Dorsolateral prefrontal cortex (tissue), 120 donors: ENCODE measurements at regions of chr19 and their contacts with region 1.

Region 1: DNA sequence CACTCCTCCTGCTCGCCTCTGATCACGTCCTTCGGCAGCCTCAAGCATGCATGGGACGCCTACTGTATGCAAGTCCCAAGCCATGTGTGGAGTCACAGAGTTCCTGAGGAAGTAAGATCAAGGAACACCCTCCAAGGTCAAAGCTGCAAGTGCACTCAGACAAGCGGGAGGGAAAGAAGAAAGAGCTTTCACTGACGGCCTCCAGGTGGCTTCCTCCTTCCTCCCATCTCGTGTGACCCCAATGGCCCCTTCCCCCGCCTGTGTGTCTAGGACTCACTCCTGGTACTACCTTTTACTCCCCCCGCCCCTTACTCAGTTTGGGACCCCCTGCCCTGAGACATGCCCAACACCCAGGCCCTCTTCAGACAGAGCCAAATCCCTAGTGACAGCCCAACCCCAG is 6.0 kb downstream of the HAUS8 start:
- DNase-seq: no peak
- H3K4me3 ChIP-seq: no peak overlapping the region
- H3K27ac ChIP-seq: no peak overlapping the region
- H3K27me3 ChIP-seq: no peaks in the 10 kb centered on the region
- CTCF ChIP-seq: no peak

Region 2: DNA sequence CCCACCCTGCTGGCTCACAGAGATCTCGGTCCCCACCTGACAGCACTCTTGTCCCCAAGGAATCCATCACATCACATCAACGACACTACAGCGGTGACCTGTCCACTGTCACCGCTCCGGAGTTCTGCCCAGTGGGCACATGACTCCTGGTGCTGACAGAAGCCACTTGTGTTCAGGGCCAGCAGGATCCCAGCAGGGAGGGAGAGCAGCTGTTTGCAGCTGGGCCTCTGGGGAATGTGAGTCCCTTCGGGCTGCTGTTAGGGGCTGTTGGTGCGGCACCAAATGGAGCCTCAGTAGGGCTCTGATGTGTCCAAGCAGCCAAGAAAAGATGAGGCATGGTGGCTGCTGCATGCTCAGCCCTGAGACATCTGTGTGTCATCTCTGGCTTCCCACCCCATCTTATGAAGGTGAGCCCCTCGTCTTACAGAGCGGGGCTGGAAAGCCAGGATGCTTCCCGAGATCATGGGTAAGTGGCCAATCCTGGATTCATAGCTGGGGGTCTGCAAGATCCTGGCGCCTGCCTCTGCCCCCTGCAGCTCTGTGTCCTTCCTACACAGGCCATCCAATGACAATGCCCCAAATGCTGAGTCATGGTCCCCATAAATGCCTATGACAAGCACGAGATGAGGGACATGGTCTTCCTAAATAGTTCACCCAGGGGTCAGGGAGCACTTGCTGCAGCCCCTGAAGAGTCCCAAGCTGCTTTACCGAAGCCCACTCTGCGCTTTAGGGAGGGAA is 124.4 kb before region 1 on chr19:
- intact Hi-C with region 1: no loop called
- DNase-seq: peak in 6 of 10 donors; percentile 39 to 58 (median 44)
- H3K4me3 ChIP-seq: no peak overlapping the region
- H3K27ac ChIP-seq: peak overlapping the region in 16 of 59 donors; percentile 14 to 61 (median 32)
- H3K27me3 ChIP-seq: no peaks in the 10 kb centered on the region
- CTCF ChIP-seq: no peak

Region 3: GRCh38 chr19:17107525-17108452 is 38.6 kb after region 1 on chr19:
- intact Hi-C with region 1: no loop called
- DNase-seq: peak in 9 of 10 donors; percentile 32 to 92 (median 72)
- H3K4me3 ChIP-seq: peak overlapping the region in 20 of 59 donors; percentile 0 to 39 (median 12)
- H3K27ac ChIP-seq: peak overlapping the region in 58 of 59 donors; percentile 26 to 92 (median 78)
- H3K27me3 ChIP-seq: no peaks in the 10 kb centered on the region
- CTCF ChIP-seq: no peak

Region 4: DNA sequence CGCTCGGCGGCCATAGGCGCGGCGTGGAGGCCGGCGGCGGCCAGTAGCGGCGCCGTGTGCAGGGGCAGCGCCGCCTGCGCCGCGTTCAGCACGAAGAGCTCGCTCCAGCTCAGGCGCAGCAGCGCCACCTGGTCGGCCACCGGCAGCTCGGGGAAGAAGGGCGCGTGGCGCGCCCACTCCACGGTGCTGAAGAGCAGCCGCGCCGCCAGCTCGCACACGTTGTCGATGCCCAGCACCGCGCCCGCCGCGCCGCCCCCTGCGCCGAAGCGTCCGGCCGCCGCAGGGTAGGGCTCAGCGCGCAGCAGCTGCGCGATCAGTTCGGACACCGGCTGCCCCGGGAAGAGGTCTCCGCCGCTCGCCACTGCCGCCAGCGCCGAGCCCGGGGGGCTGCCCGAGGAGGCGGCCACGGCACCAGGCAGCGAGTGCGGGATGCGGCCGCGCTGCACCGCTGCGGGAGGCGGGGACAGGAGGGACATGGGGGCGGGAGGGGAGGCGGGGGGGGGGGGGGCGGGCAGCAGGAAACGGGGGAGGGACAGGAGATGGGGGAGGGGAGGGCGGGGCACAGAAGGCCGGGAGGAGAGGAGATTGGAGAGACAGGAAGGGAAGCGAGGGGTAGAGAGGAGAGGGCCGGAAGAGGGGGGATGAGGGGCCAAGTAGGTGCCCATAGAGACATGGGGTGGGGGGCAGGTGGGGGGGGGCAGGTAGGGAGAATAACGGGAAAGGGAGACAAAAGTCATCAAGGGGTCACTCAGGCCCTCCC is 166.6 kb after region 1 on chr19:
- intact Hi-C with region 1: loop called in 1 of 2 experiments (anchors 5 kb)
- DNase-seq: peak; percentile 52 to 89 (median 76)
- H3K4me3 ChIP-seq: peak overlapping the region; percentile 40 to 75 (median 63)
- H3K27ac ChIP-seq: peak overlapping the region in 55 of 59 donors; percentile 12 to 96 (median 80)
- H3K27me3 ChIP-seq: no peaks in the 10 kb centered on the region
- CTCF ChIP-seq: peak in 55 of 56 donors; percentile 23 to 85 (median 67)

Region 5: GRCh38 chr19:17282488-17283255 is 213.5 kb after region 1 on chr19:
- intact Hi-C with region 1: loop called in 1 of 2 experiments (anchors 1 kb)
- DNase-seq: peak; percentile 68 to 87 (median 77)
- H3K4me3 ChIP-seq: peak overlapping the region; percentile 16 to 64 (median 48)
- H3K27ac ChIP-seq: no peak overlapping the region
- H3K27me3 ChIP-seq: peaks cover 0 to 12% (median 0%) of the 10 kb centered on the region in 45 donors
- CTCF ChIP-seq: peak; percentile 64 to 97 (median 92)

Region 6: DNA sequence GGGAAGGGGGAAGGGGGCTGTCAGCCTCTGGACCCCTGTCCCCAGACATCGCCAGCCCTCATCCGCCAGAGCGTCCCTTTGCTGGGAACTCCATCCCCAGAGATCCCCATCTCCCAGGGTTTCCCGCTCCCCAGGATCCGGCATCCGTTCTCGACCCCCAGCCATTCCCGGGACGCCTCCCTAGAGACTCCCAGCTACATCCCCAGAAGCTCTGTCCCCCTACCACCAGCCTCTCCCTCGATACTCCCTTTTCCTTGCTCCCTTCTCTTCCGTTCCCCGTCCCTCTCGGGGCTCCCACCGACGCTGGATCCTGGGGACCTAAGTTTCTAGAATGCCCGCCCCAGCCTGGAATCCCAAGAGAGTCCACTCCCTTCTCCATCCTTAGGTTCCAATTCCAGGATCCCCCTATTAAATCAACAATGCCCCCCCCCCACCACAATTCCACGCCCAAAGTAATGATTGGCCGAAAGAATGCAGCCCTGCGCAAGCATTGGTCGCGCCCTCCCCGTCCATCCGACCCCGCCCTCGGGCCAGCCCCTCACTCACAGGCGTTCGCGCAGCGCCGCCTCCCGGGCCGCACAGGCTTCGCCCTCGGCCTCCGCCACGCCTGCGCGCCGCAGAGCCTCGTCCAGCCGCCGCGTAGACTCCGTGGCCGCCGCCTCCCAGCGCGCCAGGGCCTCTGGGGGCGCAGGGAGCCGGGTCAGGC is 321.6 kb after region 1 on chr19:
- intact Hi-C with region 1: loop called in 1 of 2 experiments (anchors 5 kb)
- DNase-seq: peak; percentile 46 to 91 (median 86)
- H3K4me3 ChIP-seq: peak overlapping the region; percentile 36 to 73 (median 60)
- H3K27ac ChIP-seq: peak overlapping the region in 4 of 59 donors; percentile 25 to 62 (median 34)
- H3K27me3 ChIP-seq: peaks cover 0 to 21% (median 0%) of the 10 kb centered on the region in 45 donors
- CTCF ChIP-seq: peak; percentile 35 to 87 (median 72)